Activated CD8-positive, alpha-beta memory T cell treated with anti-CD3 and anti-CD28 coated beads, Interleukin-2, amount 10 ng/mL, durations not matched to agents 7 days and 5 days (primary cell): ENCODE measurements at regions of chr3 and their contacts with region 1.

Region 1: GRCh38 chr3:58332575-58333188 is at the start of gene PXK:
- DNase-seq: peak; percentile 84
- ATAC-seq: peak; percentile 89
- H3K4me3 Mint-ChIP-seq: peak within 1 kb of the TSS; percentile 95
- H3K27ac Mint-ChIP-seq: peak within 1 kb of the TSS; percentile 95
- H3K4me1 Mint-ChIP-seq: peaks cover 33% of the 10 kb centered on the region
- H3K27me3 Mint-ChIP-seq: no peaks in the 10 kb centered on the region
- total RNA-seq, gene PXK: 61.7 to 64.7 TPM

Region 2: GRCh38 chr3:58288011-58288728 is 44.5 kb before region 1 on chr3:
- CTCF ChIA-PET with region 1: no interaction called
- DNase-seq: peak; percentile 39
- ATAC-seq: no peak
- H3K4me3 Mint-ChIP-seq: no peak overlapping the region
- H3K27ac Mint-ChIP-seq: no peak overlapping the region
- H3K4me1 Mint-ChIP-seq: no peaks in the 10 kb centered on the region
- H3K27me3 Mint-ChIP-seq: no peaks in the 10 kb centered on the region

Region 3: GRCh38 chr3:58349792-58350626 is 17.3 kb after region 1 on chr3:
- CTCF ChIA-PET with region 1: interaction called, 144 read pairs
- DNase-seq: peak; percentile 80
- ATAC-seq: peak; percentile 68
- H3K4me3 Mint-ChIP-seq: peak overlapping the region; percentile 61
- H3K27ac Mint-ChIP-seq: peak overlapping the region; percentile 94
- H3K4me1 Mint-ChIP-seq: peaks cover 86% of the 10 kb centered on the region
- H3K27me3 Mint-ChIP-seq: no peaks in the 10 kb centered on the region